ENCODE measurements at regions of chr22 and their contacts with region 1.

Region 1: GRCh38 chr22:19122143-19122751 is at the start of gene DGCR2:
- DNase-seq: peak; percentile 99
- ATAC-seq: peak; percentile 98
- total RNA-seq, gene DGCR2: 29.9 TPM

Region 2: DNA sequence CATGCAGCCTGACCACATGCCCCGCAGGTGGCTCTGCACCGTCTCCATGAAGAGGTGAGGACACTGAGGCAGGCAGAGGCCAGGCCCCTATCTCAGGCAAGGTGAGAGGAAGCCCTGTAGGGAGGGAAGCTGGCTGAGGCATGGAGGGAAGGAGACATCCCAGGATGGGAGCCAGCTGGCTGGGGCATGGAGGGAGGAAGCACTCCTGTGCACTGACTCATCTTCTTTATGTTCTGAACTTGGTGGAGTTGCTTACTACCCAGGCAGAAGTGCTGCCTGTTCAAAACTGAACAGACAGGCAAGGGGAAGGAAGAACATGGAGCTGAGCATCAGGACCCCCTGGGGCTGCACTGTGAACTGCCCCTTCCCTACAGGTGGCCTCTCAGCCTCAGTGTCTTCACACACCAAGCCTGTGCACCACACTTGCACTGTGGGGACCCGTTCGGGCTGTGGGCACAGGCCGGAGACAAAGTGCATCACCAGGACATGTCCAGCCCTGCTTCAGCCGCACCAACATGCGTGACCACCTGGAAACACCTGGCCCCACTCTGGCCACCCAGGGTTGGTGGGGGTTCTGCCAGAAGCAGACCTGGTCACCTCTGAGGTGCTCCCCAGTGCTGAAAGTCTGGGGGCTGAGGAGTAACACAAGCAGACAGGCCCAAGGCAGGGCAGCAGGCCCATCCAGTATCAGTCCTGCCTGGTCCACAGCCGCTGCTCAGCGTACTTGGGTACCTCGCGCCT is 55.5 kb before region 1 on chr22:
- intact Hi-C with region 1: no loop called
- DNase-seq: no peak
- ATAC-seq: no peak

Region 3: GRCh38 chr22:19479357-19480172 is 357.3 kb after region 1 on chr22 and contains the start of gene CDC45:
- intact Hi-C with region 1: loop called (anchors 5 kb)
- DNase-seq: peak; percentile 97
- ATAC-seq: peak; percentile 97
- total RNA-seq, gene CDC45: 0.76 TPM